Ascending aorta (tissue), 2 donors: ENCODE measurements at regions of chr2 and their contacts with region 1.

Region 1: GRCh38 chr2:221874444-221874843 is 302.3 kb upstream of the EPHA4 start:
- DNase-seq: no peak
- H3K4me3 ChIP-seq: no peak overlapping the region
- H3K27ac ChIP-seq: no peak overlapping the region
- H3K4me1 ChIP-seq: no peaks in the 10 kb centered on the region
- H3K27me3 ChIP-seq: no peaks in the 10 kb centered on the region
- CTCF ChIP-seq: no peak

Region 2: GRCh38 chr2:221715523-221716247 is 158.8 kb before region 1 on chr2:
- intact Hi-C with region 1: no loop called
- DNase-seq: no peak
- H3K4me3 ChIP-seq: no peak overlapping the region
- H3K27ac ChIP-seq: no peak overlapping the region
- H3K4me1 ChIP-seq: no peaks in the 10 kb centered on the region
- H3K27me3 ChIP-seq: no peaks in the 10 kb centered on the region
- CTCF ChIP-seq: no peak

Region 3: DNA sequence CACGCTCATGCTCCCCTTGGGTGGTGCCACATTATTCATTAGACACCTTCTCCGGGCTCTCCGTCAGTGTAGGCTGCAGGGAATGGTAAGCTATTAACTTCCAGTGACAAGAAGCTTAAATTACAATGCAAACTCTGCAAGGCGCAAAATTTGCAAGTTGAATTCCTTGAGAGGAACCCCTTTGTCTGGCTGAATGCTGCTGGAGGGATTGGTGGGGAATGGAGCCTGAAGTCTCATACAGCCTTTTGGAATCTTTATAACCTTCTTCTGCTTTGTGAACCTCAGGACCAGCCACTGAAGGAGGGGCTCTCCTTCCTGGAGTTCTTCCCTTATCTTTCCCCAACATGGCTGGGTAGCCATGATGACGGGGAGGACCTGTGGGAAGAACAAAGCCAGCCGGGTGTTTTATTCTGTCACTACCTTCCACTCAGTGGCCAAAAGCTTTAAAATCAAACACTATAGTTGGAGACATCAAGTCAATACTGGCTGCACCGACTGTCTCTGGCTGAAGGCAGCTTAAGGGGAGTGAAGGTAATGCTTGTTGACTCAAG is 81.4 kb before region 1 on chr2:
- intact Hi-C with region 1: no loop called
- DNase-seq: no peak
- H3K4me3 ChIP-seq: no peak overlapping the region
- H3K27ac ChIP-seq: no peak overlapping the region
- H3K4me1 ChIP-seq: no peaks in the 10 kb centered on the region
- H3K27me3 ChIP-seq: no peaks in the 10 kb centered on the region
- CTCF ChIP-seq: no peak

Region 4: DNA sequence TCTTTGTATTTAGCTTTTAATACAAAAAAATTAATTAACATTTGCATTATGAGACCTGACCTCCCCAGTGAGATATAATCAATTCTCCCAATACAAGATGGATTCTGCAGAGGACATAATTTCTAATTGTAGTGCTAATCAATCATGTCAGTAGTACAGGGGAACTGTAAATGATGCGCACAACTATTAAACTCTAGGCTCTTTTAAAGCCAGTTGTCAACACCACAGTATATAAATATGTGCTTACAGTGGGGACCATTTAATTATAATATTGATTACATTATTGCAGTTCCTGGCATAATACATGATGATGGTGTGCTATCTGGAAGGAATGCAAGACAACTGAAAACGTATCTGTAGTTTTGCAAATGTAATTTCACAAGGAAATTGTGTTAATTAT is 16.7 kb before region 1 on chr2:
- intact Hi-C with region 1: loop called (anchors 1 kb)
- DNase-seq: no peak
- H3K4me3 ChIP-seq: no peak overlapping the region
- H3K27ac ChIP-seq: no peak overlapping the region
- H3K4me1 ChIP-seq: no peaks in the 10 kb centered on the region
- H3K27me3 ChIP-seq: no peaks in the 10 kb centered on the region
- CTCF ChIP-seq: no peak